Breast epithelium (tissue), 4 donors: ENCODE measurements at regions of chr13 and their contacts with region 1.

Region 1: GRCh38 chr13:89343165-89343564 is 1672.0 kb downstream of the SLITRK5 start:
- DNase-seq: no peak
- H3K4me3 ChIP-seq: no peak overlapping the region
- H3K27ac ChIP-seq: no peak overlapping the region
- H3K4me1 ChIP-seq: no peaks in the 10 kb centered on the region
- H3K27me3 ChIP-seq: no peaks in the 10 kb centered on the region
- CTCF ChIP-seq: no peak
- POLR2A ChIP-seq: no peak

Region 2: GRCh38 chr13:88384542-88384941 is 958.6 kb before region 1 on chr13:
- intact Hi-C with region 1: loop called (anchors 5 kb)
- DNase-seq: no peak
- H3K4me3 ChIP-seq: no peak overlapping the region
- H3K27ac ChIP-seq: no peak overlapping the region
- H3K4me1 ChIP-seq: no peaks in the 10 kb centered on the region
- H3K27me3 ChIP-seq: no peaks in the 10 kb centered on the region
- CTCF ChIP-seq: no peak
- POLR2A ChIP-seq: no peak